ENCODE measurements at regions of chr1 and their contacts with region 1.

Region 1: DNA sequence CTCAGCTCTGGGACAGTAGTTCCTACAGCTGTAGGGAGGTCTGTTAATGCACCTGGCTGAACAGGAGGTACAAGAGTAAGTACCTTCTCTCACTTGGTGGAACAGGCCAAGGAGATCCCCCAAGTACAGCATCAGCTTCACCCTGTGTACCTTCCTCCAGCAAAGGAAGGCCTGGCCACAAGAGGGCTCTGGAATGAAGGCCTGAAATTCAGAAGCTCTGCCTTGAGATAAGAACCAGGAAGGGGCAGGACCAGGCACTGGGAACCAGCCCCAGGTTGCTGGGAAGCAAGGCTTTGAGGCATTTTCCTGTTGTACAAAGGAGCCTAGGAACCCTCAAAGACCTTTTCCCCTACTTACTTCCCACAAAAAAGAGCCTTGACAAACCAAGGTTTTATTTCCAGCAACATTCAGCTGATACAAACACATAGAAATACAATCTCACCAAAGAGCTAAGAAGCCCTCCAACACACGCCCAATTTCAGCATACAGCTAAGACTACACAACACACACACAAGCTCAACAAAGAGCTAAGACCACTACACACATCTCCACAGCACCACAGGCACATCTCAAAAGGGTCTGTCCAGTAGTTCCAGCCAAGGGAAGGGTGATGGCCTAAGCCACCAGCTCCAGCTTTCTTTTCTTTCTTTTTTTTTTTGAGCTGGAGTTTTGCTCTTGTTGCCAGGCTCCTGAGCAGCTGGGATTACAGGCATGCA is 23.5 kb downstream of the F11R start:
- DNase-seq: peak in 1 of 2 donors; percentile 74
- ATAC-seq: peak; percentile 90
- H3K4me3 ChIP-seq: no peak overlapping the region
- H3K27ac ChIP-seq: no peak overlapping the region
- H3K4me1 ChIP-seq: no peaks in the 10 kb centered on the region
- H3K27me3 ChIP-seq: no peaks in the 10 kb centered on the region

Region 2: DNA sequence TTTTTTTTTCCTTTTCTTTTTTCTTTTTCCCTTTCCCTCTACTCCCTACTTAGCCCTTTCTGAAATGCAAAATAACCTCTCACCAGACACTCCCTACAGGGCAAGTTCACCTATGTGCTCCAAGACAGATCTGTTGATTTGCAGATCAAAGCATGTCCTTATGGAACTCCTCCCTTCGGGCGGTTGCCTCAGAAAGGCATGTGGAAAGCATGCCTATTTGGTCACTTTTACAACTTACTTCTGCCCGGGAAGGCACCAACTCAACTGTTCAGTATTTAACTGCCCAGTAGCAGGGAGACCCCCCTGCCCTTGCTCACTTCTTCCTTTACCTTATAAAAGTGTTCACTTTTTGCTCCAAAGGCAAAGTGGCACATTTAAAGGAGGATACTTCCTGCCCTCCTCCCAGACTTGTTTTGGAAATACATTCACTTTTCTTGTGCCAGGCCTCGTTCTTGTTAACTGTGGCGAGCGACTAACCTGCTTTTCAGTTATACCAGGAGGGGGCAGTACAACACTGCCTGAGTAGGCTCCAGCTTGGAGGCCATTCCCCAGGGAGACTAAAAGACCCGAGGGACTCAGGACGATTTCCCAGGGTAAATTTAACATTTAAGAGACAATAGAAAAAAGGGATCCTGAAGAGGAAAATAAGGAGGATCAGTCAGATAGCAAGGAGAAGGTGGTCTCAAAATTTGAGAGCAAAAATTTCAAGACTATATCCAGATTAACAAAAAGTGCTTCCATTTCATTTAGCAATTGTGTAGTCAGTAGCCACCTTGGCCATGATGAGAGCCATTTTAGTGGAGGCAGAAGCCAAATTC is 270.8 kb before region 1 on chr1:
- intact Hi-C with region 1: loop called in 1 of 2 experiments (anchors 5 kb)
- DNase-seq: peak in 1 of 2 donors; percentile 62
- ATAC-seq: no peak
- H3K4me3 ChIP-seq: no peak overlapping the region
- H3K27ac ChIP-seq: no peak overlapping the region
- H3K4me1 ChIP-seq: no peaks in the 10 kb centered on the region
- H3K27me3 ChIP-seq: no peaks in the 10 kb centered on the region

Region 3: GRCh38 chr1:161092621-161093028 is 95.1 kb after region 1 on chr1:
- intact Hi-C with region 1: loop called (anchors 5 kb)
- DNase-seq: no peak
- ATAC-seq: no peak
- H3K4me3 ChIP-seq: no peak overlapping the region
- H3K27ac ChIP-seq: no peak overlapping the region
- H3K4me1 ChIP-seq: peaks cover 0 to 2% of the 10 kb centered on the region in 2 donors
- H3K27me3 ChIP-seq: no peaks in the 10 kb centered on the region

Region 4: DNA sequence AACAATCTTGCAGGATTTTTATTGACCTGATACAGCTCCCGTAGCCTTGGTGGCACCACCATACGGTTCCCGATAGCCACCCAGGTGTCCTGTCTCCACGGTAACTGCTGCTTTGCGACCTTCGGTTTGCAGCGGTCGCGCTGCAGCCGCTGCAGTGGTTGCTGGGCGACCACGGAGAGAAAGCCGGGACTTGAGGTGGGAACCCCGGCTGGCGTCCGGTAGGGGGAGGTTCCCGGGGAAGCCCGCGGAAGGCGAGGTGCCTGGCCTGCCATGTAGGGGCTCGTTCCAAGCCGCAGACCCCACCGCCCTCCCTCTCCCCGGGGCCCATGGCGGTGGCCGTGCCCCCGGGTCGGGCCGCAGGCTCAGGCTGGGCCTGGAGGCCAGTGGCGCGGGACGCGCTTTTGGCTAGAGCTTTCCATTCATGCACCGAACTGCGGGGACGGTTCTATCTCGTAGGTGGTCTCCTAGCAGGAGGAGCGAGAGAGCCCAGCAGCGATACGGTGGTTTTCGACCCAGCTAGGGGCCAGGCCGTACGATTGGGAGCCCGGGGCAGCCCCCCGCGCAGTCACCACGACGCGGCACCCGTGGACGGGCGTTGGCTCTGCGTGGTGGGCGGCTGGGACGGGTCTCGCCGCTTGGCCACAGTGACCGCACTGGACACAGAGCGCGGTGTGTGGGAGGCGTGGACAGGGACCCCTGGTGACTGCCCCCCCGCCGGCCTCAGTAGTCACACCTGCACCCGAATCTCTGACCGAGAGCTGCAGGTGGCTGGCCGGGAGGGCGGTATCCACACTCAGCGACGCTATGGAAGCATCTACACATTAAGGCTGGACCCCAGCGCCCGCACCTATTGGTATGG is 101.0 kb after region 1 on chr1 and contains the start of gene KLHDC9:
- intact Hi-C with region 1: loop called (anchors 5 kb)
- DNase-seq: peak; percentile 78 to 86
- ATAC-seq: peak; percentile 86
- H3K4me3 ChIP-seq: peak within 1 kb of the TSS; percentile 46 to 54
- H3K27ac ChIP-seq: peak within 1 kb of the TSS in 1 of 2 donors; percentile 48
- H3K4me1 ChIP-seq: peaks cover 0 to 2% of the 10 kb centered on the region in 2 donors
- H3K27me3 ChIP-seq: no peaks in the 10 kb centered on the region
- total RNA-seq, gene KLHDC9: 0.78 to 2.5 TPM

Measured in aorta (tissue), 5 donors.